BJ (cell line): ENCODE measurements at regions of chr1 and their contacts with region 1.

Region 1: GRCh38 chr1:155989242-155990004 is 11.1 kb upstream of the ARHGEF2 start:
- DNase-seq: no peak
- H3K4me3 ChIP-seq: 0 out of 2 replicates have a peak overlapping the region, but pooled peaks have one; percentile 4
- H3K27me3 ChIP-seq: no peaks in the 10 kb centered on the region
- CTCF ChIP-seq: peak; percentile 98

Region 2: DNA sequence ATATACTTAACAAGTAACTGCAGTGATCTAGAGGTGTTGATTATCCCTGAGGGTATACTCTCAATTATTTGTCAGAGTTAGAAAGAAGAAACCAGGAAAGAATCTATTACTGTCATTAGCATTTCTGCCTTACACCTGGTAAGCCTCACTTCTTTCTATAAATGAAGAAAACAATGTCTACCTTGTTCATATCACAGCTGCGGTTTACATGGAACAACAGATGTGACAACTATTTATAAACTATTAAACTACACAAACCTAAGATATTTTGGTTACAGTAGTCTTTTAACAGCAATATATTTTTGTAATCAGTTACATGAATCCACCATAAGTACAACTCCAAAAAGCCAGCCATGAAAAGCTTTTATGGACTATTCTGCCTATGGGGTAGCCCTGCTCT is 173.1 kb before region 1 on chr1:
- CTCF ChIA-PET with region 1: no interaction called
- POLR2A ChIA-PET with region 1: no interaction called
- DNase-seq: no peak
- H3K4me3 ChIP-seq: no peak overlapping the region
- H3K27me3 ChIP-seq: no peaks in the 10 kb centered on the region
- CTCF ChIP-seq: no peak

Region 3: DNA sequence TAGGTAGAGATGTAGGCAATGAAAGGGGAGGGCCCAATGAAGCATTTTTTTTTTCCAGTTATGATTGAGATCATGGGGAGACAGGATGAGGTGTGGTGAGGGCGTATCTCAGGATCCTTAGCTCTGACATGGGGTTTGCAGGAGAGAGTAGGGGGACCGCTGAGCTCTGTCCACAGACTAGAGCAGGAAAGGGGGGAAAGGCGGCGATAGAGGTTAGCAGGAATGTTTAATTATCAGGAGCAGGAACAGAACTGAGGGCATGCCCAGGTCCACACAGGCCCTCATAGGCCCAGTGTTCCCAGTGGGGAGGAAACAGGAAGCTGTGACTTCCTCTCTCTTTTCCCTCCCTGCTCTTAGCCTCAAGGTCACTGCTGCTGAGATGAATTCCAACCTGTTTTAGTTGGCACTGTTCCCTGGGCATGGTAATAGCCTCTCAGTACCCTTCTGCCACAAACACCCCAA is 48.9 kb before region 1 on chr1:
- CTCF ChIA-PET with region 1: interaction called, 57 read pairs
- POLR2A ChIA-PET with region 1: no interaction called
- DNase-seq: no peak
- H3K4me3 ChIP-seq: no peak overlapping the region
- H3K27me3 ChIP-seq: no peaks in the 10 kb centered on the region
- CTCF ChIP-seq: no peak

Region 4: DNA sequence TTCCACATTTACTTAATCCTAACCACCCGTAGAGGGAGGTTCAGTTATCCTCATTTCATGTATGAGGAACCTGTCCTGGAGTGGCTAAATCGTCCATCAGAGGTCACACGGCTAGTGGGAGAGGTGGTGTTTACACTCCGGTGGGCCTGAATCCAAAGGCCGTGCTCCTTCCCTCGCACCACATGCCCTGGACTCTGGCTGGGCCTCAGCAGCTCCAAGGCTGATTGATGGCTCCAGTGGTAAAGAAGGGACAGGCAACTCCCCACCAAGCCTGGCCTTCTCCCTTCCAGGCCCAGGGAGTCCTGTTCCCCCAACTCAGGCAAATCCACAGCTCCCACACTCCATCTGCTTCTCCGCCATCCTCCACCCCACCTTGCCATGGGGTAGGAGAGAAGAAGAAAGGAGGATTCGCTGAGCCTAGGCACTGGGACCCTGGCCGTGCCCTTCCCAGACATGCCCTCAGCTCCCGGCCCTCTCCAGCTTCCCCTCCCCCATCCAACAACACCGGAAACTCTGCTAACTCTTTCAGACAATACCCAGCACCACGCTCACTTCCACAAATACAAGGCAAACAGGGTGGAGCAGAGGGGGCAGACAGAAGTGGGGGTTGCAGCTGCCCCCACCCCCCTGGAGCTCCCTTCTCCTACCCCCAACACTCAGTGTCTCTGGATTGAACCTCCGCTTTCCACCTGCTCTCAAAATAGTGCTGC is 21.9 kb before region 1 on chr1:
- CTCF ChIA-PET with region 1: interaction called, 13 read pairs
- POLR2A ChIA-PET with region 1: no interaction called
- DNase-seq: no peak
- H3K4me3 ChIP-seq: no peak overlapping the region
- H3K27me3 ChIP-seq: no peaks in the 10 kb centered on the region
- CTCF ChIP-seq: no peak

Region 5: GRCh38 chr1:156001682-156002171 is 12.3 kb after region 1 on chr1:
- CTCF ChIA-PET with region 1: interaction called, 24 read pairs
- POLR2A ChIA-PET with region 1: interaction called, 3 read pairs
- DNase-seq: no peak
- H3K4me3 ChIP-seq: no peak overlapping the region
- H3K27me3 ChIP-seq: no peaks in the 10 kb centered on the region
- CTCF ChIP-seq: no peak

Region 6: GRCh38 chr1:156233426-156234127 is 244.2 kb after region 1 on chr1:
- CTCF ChIA-PET with region 1: no interaction called
- POLR2A ChIA-PET with region 1: no interaction called
- DNase-seq: peak; percentile 60
- H3K4me3 ChIP-seq: no peak overlapping the region
- H3K27me3 ChIP-seq: no peaks in the 10 kb centered on the region
- CTCF ChIP-seq: no peak